ENCODE measurements at regions of chr3 and their contacts with region 1.

Region 1: DNA sequence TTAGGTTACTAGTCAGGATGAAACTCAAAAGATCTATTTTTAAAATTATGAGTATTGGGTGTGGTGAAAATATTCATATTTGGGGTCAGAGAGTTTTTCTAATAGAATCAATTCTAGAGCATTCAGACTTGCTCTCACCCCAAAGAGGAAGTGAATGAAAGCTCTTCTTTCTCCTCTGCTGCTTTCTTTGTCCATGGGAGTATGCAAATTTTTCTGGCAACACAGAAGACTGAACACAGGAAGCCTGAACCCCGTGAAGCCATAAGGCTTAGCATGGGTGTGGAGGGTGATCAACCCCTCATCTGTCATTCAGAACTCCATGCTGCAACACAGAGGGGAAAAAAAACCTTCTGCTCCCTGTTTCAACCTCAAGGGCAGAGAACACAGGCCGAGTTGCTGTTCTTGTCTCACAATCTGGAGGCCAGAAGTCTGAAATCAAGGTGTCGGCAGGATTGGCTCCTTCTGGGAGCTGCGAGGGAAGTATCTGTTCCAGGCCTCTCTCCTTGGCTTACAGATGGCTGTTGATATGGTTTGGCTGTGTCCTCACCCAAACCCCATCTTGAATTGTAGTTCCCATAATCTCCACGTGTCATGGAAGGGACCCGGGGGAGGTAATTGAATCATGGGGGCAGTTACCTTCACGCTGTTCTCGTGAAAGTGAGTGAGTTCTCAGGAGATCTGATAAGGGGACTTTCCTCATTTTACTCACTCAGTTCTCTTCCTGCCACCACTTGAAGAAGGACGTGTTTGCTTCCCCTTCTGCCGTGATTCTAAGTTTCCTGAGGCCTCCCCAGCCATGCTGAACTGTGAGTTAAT is 33.7 kb upstream of the CD47 start:
- DNase-seq: peak; percentile 61
- ATAC-seq: peak; percentile 64
- H3K4me3 Mint-ChIP-seq: peak overlapping the region; percentile 83
- H3K27ac Mint-ChIP-seq: peak overlapping the region; percentile 100
- H3K4me1 Mint-ChIP-seq: peaks cover 91% of the 10 kb centered on the region
- H3K27me3 Mint-ChIP-seq: no peaks in the 10 kb centered on the region
- CTCF ChIP-seq: no peak

Region 2: DNA sequence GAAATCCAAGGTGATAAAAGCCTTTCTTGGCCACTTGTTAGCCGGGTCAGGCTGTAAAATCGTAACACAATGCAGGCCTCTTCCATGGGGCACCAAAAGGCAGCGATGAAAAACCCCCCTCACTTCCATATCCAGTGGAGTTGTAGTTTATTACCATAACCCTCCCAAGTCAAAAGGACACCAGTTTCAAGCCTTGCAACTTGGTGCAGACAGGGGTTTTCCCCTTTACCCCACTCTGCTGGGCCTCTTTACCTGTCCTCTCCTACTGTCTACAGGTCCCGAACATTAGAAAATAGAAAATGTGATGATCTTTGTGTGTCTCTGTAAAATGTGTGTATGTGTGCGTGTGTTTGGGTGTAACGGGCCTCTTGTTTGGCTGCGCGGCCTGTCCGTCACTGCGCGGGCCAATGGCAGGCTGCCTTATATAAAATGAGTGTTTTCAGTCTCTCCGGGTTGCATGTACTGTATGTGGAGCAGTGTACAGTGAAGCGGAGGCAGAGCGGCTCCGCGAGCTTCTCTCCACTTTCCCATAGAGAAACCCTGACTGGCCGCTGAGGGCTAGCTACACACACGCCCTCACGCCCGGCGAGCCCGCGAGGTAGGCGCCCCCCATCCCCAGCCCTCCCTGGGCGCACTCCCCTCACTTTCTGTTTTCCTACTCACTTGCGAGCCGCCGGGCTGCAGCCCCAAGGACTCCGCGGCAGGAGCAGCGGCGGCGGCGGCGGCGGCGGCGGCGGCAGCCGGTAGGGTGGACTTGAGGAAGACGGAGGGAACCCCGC is 601.8 kb before region 1 on chr3 and contains the start of gene BBX:
- CTCF ChIA-PET with region 1: no interaction called
- POLR2A ChIA-PET with region 1: no interaction called
- intact Hi-C with region 1: loop called (anchors 2 kb)
- DNase-seq: peak; percentile 89
- ATAC-seq: peak; percentile 87
- H3K4me3 Mint-ChIP-seq: peak within 1 kb of the TSS; percentile 96
- H3K27ac Mint-ChIP-seq: peak within 1 kb of the TSS; percentile 98
- H3K4me1 Mint-ChIP-seq: peaks cover 37% of the 10 kb centered on the region
- H3K27me3 Mint-ChIP-seq: no peaks in the 10 kb centered on the region
- CTCF ChIP-seq: no peak
- total RNA-seq, gene BBX: 75.8 and 77.5 TPM in 2 replicates

Region 3: DNA sequence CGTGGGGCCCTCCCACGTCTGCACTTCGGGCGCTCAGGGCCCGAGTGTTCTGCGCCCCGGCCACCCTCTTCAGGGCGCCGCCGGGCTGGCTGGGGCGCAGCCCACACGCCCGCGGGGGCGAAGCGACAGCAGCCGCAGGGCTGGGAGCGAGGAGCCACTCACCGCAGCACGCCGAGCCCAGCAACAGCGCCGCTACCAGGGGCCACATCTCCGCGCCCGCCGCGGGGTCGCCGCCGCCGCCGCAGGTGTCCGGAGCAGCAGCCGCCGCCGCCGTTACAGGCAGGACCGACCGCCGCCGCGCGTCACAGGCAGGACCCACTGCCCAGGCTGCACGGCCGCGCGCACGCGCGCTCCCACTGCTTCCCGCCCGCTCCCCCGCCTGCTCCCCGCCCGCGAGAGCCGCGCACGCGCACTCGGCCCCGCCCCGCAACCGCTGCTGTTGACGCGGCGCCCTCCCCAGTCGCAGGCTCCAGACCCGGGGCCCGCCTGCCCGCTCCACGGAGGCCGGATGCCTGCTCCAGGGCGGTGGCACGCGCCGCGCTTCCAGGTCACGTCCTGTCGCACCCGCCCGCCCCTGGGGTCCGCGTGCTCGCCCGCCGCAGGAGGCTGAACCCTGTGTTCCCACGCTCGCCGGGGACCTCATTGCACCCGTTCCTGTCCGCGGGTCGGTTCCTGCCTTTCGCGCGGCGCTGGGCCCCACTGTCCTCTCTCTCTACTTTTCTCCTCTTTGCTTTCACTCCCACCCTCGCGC is 33.7 kb before region 1 on chr3 and contains the start of gene CD47:
- CTCF ChIA-PET with region 1: interaction called, 7 read pairs
- POLR2A ChIA-PET with region 1: interaction called, 211 read pairs
- intact Hi-C with region 1: loop called (anchors 1 kb)
- DNase-seq: peak; percentile 97
- ATAC-seq: peak; percentile 81
- H3K4me3 Mint-ChIP-seq: peak within 1 kb of the TSS; percentile 97
- H3K27ac Mint-ChIP-seq: peak within 1 kb of the TSS; percentile 97
- H3K4me1 Mint-ChIP-seq: peaks cover 33% of the 10 kb centered on the region
- H3K27me3 Mint-ChIP-seq: no peaks in the 10 kb centered on the region
- CTCF ChIP-seq: no peak
- total RNA-seq, gene CD47: 158 and 184 TPM in 2 replicates

Region 4: GRCh38 chr3:108136561-108137459 is 12.3 kb after region 1 on chr3:
- CTCF ChIA-PET with region 1: interaction called, 3 read pairs
- POLR2A ChIA-PET with region 1: interaction called, 75 read pairs
- intact Hi-C with region 1: loop called (anchors 1 kb)
- DNase-seq: no peak
- ATAC-seq: peak; percentile 60
- H3K4me3 Mint-ChIP-seq: peak overlapping the region; percentile 17
- H3K27ac Mint-ChIP-seq: peak overlapping the region; percentile 89
- H3K4me1 Mint-ChIP-seq: peaks cover 82% of the 10 kb centered on the region
- H3K27me3 Mint-ChIP-seq: no peaks in the 10 kb centered on the region
- CTCF ChIP-seq: no peak

Region 5: GRCh38 chr3:108292905-108293328 is 168.4 kb after region 1 on chr3:
- CTCF ChIA-PET with region 1: no interaction called
- POLR2A ChIA-PET with region 1: interaction called, 9 read pairs
- intact Hi-C with region 1: loop called (anchors 2 kb)
- DNase-seq: no peak
- ATAC-seq: peak; percentile 32
- H3K4me3 Mint-ChIP-seq: peak overlapping the region; percentile 19
- H3K27ac Mint-ChIP-seq: peak overlapping the region; percentile 41
- H3K4me1 Mint-ChIP-seq: peaks cover 51% of the 10 kb centered on the region
- H3K27me3 Mint-ChIP-seq: no peaks in the 10 kb centered on the region
- CTCF ChIP-seq: no peak

Region 6: DNA sequence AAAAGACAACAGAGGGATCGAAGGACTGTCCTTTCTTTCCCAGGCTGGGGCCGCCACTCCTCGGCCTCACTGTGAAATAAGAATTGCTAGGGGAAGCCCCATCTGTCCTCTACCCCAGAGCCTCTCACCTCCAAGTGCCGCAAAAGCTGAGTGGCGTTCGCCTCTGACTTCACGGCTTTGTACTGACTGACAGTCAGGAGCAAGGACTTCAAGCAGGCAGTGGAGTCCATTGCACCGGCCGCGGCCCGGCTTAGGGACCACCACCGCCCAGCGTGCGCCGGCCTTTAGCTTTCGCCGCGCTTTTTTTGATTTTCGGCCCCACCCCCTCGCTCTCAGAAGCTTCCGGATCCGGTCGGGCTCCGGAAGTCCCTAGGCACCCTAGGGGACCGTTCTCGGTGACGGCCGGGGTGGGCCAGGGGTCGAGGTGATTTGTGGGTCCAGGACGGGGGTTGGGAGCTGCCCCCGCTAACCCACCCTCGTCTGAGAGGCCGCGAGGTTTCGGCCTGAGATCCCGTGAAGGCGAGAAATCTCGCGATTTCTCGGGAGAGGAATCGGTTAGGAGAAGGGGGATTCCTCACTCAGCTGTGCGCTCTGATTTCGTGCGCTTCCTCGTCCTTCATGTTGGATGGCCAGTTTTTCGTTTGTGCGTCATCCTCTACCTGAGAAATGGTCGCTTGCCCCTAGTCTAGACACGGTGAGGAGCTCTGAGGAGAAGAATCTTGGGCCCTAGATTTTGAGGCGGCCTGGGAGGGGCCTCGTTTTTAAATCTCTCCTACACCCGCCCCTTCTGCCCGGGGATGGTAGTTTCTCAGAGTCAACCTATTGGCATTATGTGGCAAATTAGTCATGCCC is 464.8 kb after region 1 on chr3 and contains the starts of genes CIP2A and DZIP3:
- CTCF ChIA-PET with region 1: no interaction called
- POLR2A ChIA-PET with region 1: interaction called, 8 read pairs
- intact Hi-C with region 1: loop called (anchors 1 kb)
- DNase-seq: peak; percentile 85
- ATAC-seq: peak; percentile 92
- H3K4me3 Mint-ChIP-seq: peak within 1 kb of the TSS; percentile 97
- H3K27ac Mint-ChIP-seq: peak within 1 kb of the TSS; percentile 100
- H3K4me1 Mint-ChIP-seq: peaks cover 33% of the 10 kb centered on the region
- H3K27me3 Mint-ChIP-seq: no peaks in the 10 kb centered on the region
- CTCF ChIP-seq: no peak
- total RNA-seq, gene CIP2A: 11.3 and 13.1 TPM in 2 replicates
- total RNA-seq, gene DZIP3: 15.5 and 16.7 TPM in 2 replicates